Mammary epithelial cell (primary cell): ENCODE measurements at regions of chr10 and their contacts with region 1.

Region 1: GRCh38 chr10:70331486-70332268 is 47.9 kb upstream of the NPFFR1 start:
- DNase-seq: peak; percentile 96
- H3K4me3 ChIP-seq: no peak overlapping the region
- H3K27ac ChIP-seq: no peak overlapping the region
- H3K4me1 ChIP-seq: peaks cover 20% of the 10 kb centered on the region
- H3K27me3 ChIP-seq: no peaks in the 10 kb centered on the region
- CTCF ChIP-seq: peak in 1 of 2 donors; percentile 48

Region 2: DNA sequence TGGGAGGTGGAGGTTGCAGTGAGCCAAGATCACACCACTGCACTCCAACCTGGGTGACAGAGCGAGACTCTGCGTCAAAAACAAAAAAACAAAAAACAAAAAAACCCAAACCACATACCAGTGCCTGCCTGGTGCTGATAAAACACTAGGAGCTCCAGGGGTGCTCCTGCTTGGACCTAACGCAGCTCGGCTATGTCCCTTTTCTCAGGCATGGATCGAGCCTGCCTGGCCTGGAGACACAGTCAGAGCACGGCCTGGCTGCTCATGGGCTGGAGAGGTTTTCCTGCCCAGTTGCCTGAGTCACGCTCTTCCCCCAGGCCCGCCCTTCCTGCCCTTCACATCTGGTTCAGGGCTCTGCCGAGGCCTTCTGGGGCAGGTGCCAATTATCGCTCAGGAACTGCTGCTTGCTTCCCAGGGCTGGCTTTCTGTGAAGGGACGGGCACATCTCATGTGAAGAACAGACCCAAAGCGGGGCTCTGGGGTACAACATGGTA is 35.2 kb before region 1 on chr10:
- CTCF ChIA-PET with region 1: no interaction called
- dilution Hi-C with region 1: no loop called
- in situ Hi-C with region 1: no loop called
- intact Hi-C with region 1: loop called (anchors 5 kb)
- DNase-seq: peak; percentile 73
- H3K4me3 ChIP-seq: no peak overlapping the region
- H3K27ac ChIP-seq: no peak overlapping the region
- H3K4me1 ChIP-seq: peaks cover 15% of the 10 kb centered on the region
- H3K27me3 ChIP-seq: no peaks in the 10 kb centered on the region
- CTCF ChIP-seq: no peak